PC-3 (cell line): ENCODE measurements at regions of chr22 and their contacts with region 1.

Region 1: DNA sequence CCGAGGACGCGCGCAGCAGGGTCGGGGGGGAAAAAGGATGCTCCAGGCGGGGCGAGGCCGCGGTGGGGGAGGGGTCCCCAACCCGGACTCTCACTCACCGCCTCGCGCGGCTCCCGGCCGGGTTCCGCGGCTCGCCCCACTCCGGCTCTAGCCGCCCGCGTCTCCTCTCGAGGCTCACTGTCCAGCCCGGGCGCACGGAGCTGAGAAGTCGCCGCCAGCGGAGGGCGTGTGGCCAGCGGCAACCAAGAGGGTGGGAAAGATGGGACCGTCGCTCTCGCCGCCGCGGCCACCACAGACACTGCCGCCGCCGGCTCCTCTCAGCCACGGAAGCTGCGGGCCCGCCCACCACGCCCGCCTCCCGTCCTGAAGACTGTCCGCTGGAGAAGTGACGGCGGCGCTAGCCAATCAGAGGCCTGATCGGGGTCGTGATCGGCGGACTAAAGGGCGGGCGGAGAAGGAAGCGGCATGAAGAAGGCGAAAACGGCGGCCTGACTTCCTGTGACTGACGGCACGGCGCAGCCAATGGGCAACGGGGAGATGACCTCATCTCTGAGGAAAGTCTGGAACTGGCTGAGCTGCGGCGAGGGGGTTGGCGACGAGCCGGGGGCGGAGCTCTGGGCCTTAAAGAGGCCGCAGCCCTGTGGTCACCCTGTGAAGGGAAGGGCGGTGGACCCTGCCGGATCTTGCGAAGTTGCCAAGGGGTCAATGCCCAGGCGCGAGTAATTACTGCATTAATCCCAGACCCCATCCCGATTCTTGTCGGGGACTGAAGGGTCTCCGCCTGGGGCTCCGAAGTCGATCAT is at the start of gene MRTFA:
- DNase-seq: peak; percentile 98
- ATAC-seq: peak; percentile 84
- H3K4me3 ChIP-seq: peak within 1 kb of the TSS; percentile 74
- H3K27ac ChIP-seq: peak within 1 kb of the TSS; percentile 78
- H3K4me1 ChIP-seq: peaks cover 17% of the 10 kb centered on the region
- H3K27me3 ChIP-seq: no peaks in the 10 kb centered on the region
- CTCF ChIP-seq: no peak
- total RNA-seq, gene MRTFA: 28.0 and 32.6 TPM in 2 replicates

Region 2: GRCh38 chr22:40423310-40423688 is 213.3 kb before region 1 on chr22:
- CTCF ChIA-PET with region 1: interaction called, 17 read pairs
- POLR2A ChIA-PET with region 1: no interaction called
- intact Hi-C with region 1: no loop called
- DNase-seq: no peak
- ATAC-seq: no peak
- H3K4me3 ChIP-seq: no peak overlapping the region
- H3K27ac ChIP-seq: no peak overlapping the region
- H3K4me1 ChIP-seq: no peaks in the 10 kb centered on the region
- H3K27me3 ChIP-seq: no peaks in the 10 kb centered on the region
- CTCF ChIP-seq: no peak

Region 3: DNA sequence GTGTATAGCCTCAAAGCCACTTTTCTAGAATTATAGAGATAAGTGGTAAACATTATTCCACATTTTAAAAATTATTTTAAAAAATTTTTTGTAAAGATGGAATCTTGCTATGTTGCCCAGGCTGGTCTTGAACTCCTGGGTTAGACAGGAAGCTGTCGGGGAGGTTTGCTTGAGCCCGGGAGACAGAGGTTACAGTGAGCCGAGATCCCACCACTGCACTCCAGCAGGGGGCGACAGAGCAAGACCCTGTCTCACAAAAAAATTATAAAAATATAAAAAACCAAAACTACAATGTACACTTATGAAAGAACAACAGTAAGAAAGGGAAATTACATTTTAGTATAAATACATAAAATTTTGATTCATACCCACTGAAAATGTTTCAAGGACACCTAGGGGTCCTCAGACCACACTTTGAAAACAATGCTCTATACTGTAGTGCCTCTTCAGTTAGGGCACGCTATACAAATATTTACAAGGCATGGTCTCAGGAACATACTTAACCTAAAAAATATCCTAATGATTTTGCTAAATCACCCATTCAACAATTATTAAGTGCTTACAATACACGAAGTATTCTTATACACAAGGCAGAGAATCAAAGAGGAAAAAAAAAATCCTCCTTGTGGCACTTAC is 111.2 kb before region 1 on chr22:
- CTCF ChIA-PET with region 1: no interaction called
- POLR2A ChIA-PET with region 1: interaction called, 4 read pairs
- intact Hi-C with region 1: loop called (anchors 2 kb)
- DNase-seq: peak; percentile 48
- ATAC-seq: peak; percentile 55
- H3K4me3 ChIP-seq: no peak overlapping the region
- H3K27ac ChIP-seq: no peak overlapping the region
- H3K4me1 ChIP-seq: peaks cover 29% of the 10 kb centered on the region
- H3K27me3 ChIP-seq: no peaks in the 10 kb centered on the region
- CTCF ChIP-seq: peak; percentile 65

Region 4: DNA sequence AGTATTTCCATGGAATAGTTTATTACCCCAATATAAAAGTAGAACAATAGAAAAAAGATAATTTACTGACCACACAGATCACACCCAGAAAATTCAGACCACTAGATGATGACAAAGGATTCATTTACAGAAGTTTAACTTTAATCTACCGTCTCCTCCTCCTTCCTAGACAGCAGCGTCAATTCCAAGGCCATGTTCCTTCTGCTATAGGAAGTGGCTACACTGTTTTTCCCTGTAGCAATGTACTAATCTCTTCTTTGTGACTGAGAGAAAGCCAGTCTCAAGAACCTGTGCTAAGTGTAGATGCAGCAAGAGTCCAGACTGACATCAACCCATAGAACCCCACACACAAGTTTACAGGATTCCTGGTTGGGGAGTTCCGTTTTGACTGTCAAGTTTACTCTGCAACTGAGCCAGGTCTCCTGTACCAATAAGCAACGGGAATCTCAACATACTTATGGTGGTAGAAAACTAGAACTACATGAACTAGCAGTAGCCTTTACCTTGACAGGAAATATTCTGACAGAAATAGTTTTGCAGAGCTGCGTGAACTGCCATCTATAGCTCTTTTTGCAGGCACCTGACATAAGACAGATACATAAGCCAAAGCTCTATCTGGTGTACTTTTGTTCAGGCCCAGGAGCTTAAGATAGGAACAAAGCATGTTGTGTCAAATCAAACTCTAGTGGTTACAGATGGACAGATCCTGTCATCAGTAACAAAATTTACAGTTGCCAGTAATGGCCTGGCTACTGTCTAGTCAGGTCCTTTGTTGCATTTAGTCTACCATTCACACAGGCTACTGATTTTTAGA is 42.9 kb before region 1 on chr22:
- CTCF ChIA-PET with region 1: no interaction called
- POLR2A ChIA-PET with region 1: no interaction called
- intact Hi-C with region 1: no loop called
- DNase-seq: no peak
- ATAC-seq: no peak
- H3K4me3 ChIP-seq: no peak overlapping the region
- H3K27ac ChIP-seq: no peak overlapping the region
- H3K4me1 ChIP-seq: peaks cover 38% of the 10 kb centered on the region
- H3K27me3 ChIP-seq: no peaks in the 10 kb centered on the region
- CTCF ChIP-seq: no peak

Region 5: GRCh38 chr22:40703174-40703573 is 66.6 kb after region 1 on chr22:
- CTCF ChIA-PET with region 1: no interaction called
- POLR2A ChIA-PET with region 1: no interaction called
- intact Hi-C with region 1: no loop called
- DNase-seq: no peak
- ATAC-seq: no peak
- H3K4me3 ChIP-seq: no peak overlapping the region
- H3K27ac ChIP-seq: no peak overlapping the region
- H3K4me1 ChIP-seq: no peaks in the 10 kb centered on the region
- H3K27me3 ChIP-seq: no peaks in the 10 kb centered on the region
- CTCF ChIP-seq: no peak

Region 6: GRCh38 chr22:40782518-40782917 is 145.9 kb after region 1 on chr22:
- CTCF ChIA-PET with region 1: no interaction called
- POLR2A ChIA-PET with region 1: no interaction called
- intact Hi-C with region 1: no loop called
- DNase-seq: peak; percentile 43
- ATAC-seq: no peak
- H3K4me3 ChIP-seq: no peak overlapping the region
- H3K27ac ChIP-seq: no peak overlapping the region
- H3K4me1 ChIP-seq: peaks cover 9% of the 10 kb centered on the region
- H3K27me3 ChIP-seq: no peaks in the 10 kb centered on the region
- CTCF ChIP-seq: no peak